ENCODE measurements at regions of chr4 and their contacts with region 1.

Region 1: GRCh38 chr4:183919141-183919540 is 14.0 kb downstream of the STOX2 start:
- DNase-seq: peak; percentile 33 to 66
- ATAC-seq: no peak
- H3K4me3 ChIP-seq: no peak overlapping the region
- H3K27ac ChIP-seq: no peak overlapping the region
- H3K4me1 ChIP-seq: no peaks in the 10 kb centered on the region
- H3K27me3 ChIP-seq: no peaks in the 10 kb centered on the region
- CTCF ChIP-seq: no peak

Region 2: GRCh38 chr4:183960046-183960420 is 40.9 kb after region 1 on chr4:
- intact Hi-C with region 1: no loop called
- DNase-seq: peak; percentile 43 to 70
- ATAC-seq: peak; percentile 73 to 97 (median 95)
- H3K4me3 ChIP-seq: peak overlapping the region; percentile 54
- H3K27ac ChIP-seq: no peak overlapping the region
- H3K4me1 ChIP-seq: peaks cover 7% of the 10 kb centered on the region
- H3K27me3 ChIP-seq: no peaks in the 10 kb centered on the region
- CTCF ChIP-seq: no peak

Region 3: GRCh38 chr4:183977707-183978106 is 58.6 kb after region 1 on chr4:
- intact Hi-C with region 1: loop called in 1 of 2 experiments (anchors 5 kb)
- DNase-seq: no peak
- ATAC-seq: no peak
- H3K4me3 ChIP-seq: no peak overlapping the region
- H3K27ac ChIP-seq: no peak overlapping the region
- H3K4me1 ChIP-seq: no peaks in the 10 kb centered on the region
- H3K27me3 ChIP-seq: no peaks in the 10 kb centered on the region
- CTCF ChIP-seq: no peak